ENCODE measurements at regions of chr15 and their contacts with region 1.

Region 1: DNA sequence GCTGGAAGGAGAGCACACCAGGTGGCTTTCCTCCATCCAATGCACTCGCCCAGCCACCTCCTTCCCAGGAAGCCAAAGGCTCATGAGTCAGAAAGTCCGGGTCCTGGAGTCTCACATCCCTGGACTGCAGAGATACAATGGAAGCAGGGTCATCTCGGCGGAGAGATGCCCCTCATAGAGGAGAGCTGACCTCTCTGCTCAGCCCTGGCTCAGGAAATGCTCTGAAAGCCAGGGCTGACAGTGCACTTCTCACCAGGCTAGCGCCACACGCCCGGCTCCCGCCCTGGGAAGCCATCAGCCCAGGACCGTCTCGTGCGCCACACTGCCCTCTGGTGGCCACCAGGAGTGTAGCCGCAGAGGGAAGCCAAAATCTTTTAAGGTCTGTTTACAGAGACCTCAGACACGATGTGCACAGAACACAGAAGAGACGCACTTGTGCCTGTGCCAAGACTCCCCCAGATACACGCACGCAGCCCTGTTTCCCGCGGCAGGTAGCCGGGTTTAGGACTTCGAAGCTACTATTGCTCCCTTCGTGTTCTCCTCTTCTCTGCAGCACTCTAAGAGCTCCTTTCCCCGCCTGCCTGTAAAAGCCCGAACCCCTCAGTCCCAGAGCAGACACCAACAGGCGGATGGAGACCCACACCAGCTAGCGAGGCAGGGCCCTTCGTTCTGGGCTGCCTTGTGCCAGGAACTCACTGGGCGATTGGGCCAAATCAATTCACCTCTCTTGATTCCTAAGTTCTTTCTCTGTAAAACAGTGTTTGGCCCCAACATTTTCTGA is 9.7 kb downstream of the NTRK3 start:
- H3K4me3 Mint-ChIP-seq: no peak overlapping the region
- H3K27ac Mint-ChIP-seq: no peak overlapping the region
- H3K4me1 Mint-ChIP-seq: peaks cover 5% of the 10 kb centered on the region
- H3K27me3 Mint-ChIP-seq: peaks cover 13% of the 10 kb centered on the region

Region 2: GRCh38 chr15:86929461-86929860 is 1317.4 kb before region 1 on chr15:
- intact Hi-C with region 1: loop called (anchors 10 kb)
- H3K4me3 Mint-ChIP-seq: no peak overlapping the region
- H3K27ac Mint-ChIP-seq: no peak overlapping the region
- H3K4me1 Mint-ChIP-seq: no peaks in the 10 kb centered on the region
- H3K27me3 Mint-ChIP-seq: no peaks in the 10 kb centered on the region